Aorta (tissue), 5 donors: ENCODE measurements at regions of chr11 and their contacts with region 1.

Region 1: DNA sequence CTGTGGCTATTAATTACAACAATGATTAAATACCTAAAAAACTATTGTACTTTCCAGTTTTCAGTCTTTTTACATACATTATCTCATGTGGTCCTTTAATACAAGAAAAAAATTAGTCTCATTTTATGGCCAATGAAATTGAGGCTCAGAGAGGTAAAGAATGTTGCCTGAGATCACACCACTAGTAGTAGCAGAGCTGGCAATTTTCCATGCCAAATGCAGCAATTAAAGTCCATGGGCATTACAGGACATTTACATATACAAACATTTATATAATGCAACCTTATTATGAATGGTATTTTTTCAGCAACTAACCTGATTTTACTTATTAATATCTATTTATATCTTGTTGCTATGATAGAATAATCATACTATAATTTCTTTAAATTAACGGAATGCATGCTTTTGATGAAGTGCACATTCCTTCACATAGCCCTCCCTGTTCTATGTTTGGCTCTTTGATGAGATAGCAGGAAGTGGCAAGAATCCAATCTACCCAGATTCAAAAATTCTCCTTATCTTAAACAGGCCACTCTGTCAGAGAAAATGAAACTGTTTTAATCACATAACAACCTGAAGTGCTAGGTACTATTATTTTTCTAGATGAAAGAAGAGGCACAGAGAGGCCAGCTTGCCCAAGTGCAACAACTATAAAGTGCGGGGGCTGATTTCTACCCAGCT is 120.9 kb upstream of the LDLRAD3 start:
- DNase-seq: no peak
- ATAC-seq: no peak
- H3K4me3 ChIP-seq: no peak overlapping the region
- H3K27ac ChIP-seq: no peak overlapping the region
- H3K4me1 ChIP-seq: no peaks in the 10 kb centered on the region
- H3K27me3 ChIP-seq: peaks cover 0 to 1% of the 10 kb centered on the region in 2 donors

Region 2: GRCh38 chr11:36041988-36042611 is 219.1 kb after region 1 on chr11:
- intact Hi-C with region 1: loop called in 1 of 2 experiments (anchors 10 kb)
- DNase-seq: no peak
- ATAC-seq: no peak
- H3K4me3 ChIP-seq: no peak overlapping the region
- H3K27ac ChIP-seq: no peak overlapping the region
- H3K4me1 ChIP-seq: no peaks in the 10 kb centered on the region
- H3K27me3 ChIP-seq: no peaks in the 10 kb centered on the region

Region 3: GRCh38 chr11:36131721-36132397 is 308.9 kb after region 1 on chr11:
- intact Hi-C with region 1: loop called (anchors 5 kb)
- DNase-seq: peak in 1 of 2 donors; percentile 56
- ATAC-seq: peak; percentile 79
- H3K4me3 ChIP-seq: no peak overlapping the region
- H3K27ac ChIP-seq: no peak overlapping the region
- H3K4me1 ChIP-seq: no peaks in the 10 kb centered on the region
- H3K27me3 ChIP-seq: no peaks in the 10 kb centered on the region

Region 4: GRCh38 chr11:36258730-36259360 is 435.9 kb after region 1 on chr11:
- intact Hi-C with region 1: loop called in 1 of 2 experiments (anchors 5 kb)
- DNase-seq: peak in 1 of 2 donors; percentile 70
- ATAC-seq: peak; percentile 76
- H3K4me3 ChIP-seq: no peak overlapping the region
- H3K27ac ChIP-seq: no peak overlapping the region
- H3K4me1 ChIP-seq: no peaks in the 10 kb centered on the region
- H3K27me3 ChIP-seq: no peaks in the 10 kb centered on the region

Region 5: GRCh38 chr11:36265793-36266628 is 443.1 kb after region 1 on chr11:
- intact Hi-C with region 1: loop called in 1 of 2 experiments (anchors 5 kb)
- DNase-seq: peak; percentile 58 to 80
- ATAC-seq: peak; percentile 62
- H3K4me3 ChIP-seq: no peak overlapping the region
- H3K27ac ChIP-seq: no peak overlapping the region
- H3K4me1 ChIP-seq: no peaks in the 10 kb centered on the region
- H3K27me3 ChIP-seq: no peaks in the 10 kb centered on the region